Activated B cell treated with CpG ODN at 0.5 μM for 24 hours (primary cell): ENCODE measurements at regions of chr3 and their contacts with region 1.

Region 1: DNA sequence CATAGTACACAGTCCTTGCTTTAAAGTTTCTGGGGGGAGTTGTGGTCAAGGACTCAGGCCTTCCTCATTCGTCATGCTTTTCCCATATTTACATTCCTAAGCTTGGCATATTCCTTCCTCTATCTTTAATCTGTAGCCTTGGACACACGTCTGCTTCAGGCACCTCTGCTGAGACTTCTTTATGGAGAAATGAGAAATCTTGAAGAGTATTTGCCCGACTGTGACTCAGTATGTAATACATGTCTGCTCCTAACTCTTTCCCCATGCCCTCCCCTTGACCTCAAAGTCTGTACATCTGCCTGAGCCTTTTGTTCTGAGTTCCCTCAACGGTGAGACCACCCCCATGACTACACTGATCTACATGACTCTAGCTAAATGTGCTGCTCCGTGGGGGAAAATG is 246.1 kb downstream of the SI start:
- DNase-seq: no peak
- ATAC-seq: no peak
- H3K4me3 Mint-ChIP-seq: no peak overlapping the region
- H3K27ac Mint-ChIP-seq: no peak overlapping the region
- H3K4me1 Mint-ChIP-seq: no peaks in the 10 kb centered on the region
- H3K27me3 Mint-ChIP-seq: no peaks in the 10 kb centered on the region
- CTCF ChIP-seq: no peak

Region 2: DNA sequence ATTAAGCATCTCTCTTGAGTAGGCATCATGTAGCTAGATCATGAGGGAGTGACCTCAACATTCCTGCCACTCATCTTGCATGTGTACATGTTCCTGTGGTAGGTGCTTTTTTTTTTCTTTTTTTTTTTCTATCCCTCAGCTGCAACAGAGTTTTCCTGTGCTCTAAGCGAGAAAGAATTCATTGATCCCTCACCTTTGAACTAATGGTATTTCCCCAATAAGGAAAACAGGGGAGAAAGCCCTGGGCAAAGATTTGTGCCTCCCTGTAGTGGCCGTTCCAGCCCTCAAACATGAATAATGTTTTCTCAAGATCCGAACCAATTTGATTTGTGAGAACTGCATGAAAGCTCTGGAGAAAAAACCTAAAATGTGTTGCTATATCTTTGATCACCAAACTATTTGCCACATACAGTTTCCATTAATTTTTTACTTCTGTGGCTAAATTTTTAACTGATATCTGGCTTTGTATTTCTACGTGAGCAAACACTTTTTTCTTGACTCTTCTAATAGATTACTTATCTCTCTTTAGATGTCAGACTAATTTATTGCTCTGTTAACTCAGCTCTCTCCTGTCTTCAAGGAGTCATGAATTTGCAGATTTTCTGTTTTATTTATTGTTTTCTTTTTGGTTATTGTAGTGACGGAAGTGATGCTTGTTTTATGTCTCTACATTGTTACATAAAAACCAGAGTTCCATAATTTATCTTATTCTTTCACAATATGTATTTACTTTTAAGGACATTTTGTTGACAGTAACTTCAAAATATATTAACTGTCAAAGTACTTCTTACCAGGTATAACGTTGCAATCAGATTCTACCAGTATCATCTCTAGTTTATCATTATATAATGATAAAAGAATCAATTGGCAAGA is 1939.1 kb before region 1 on chr3:
- CTCF ChIA-PET with region 1: no interaction called
- POLR2A ChIA-PET with region 1: no interaction called
- intact Hi-C with region 1: no loop called
- DNase-seq: no peak
- ATAC-seq: no peak
- H3K4me3 Mint-ChIP-seq: no peak overlapping the region
- H3K27ac Mint-ChIP-seq: no peak overlapping the region
- H3K4me1 Mint-ChIP-seq: no peaks in the 10 kb centered on the region
- H3K27me3 Mint-ChIP-seq: no peaks in the 10 kb centered on the region
- CTCF ChIP-seq: no peak

Region 3: DNA sequence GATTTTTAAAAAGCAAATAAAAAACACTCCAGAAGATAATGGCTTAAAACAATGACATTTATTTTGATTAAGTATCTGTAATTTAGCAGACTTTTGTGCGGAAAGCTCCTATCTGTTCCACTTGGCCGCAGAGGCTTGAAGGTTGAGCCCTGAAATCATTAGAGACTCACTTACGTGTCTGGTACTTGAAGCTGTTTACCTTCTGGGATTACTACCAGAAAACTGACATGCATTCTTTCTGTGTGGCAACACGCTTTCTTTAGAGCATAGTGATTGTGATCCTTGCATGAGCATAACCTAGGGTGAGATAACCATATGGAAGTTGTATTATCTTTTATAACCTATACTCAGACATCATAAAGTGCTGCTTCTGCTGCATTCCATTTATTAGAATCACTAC is 52.4 kb before region 1 on chr3:
- CTCF ChIA-PET with region 1: no interaction called
- POLR2A ChIA-PET with region 1: no interaction called
- intact Hi-C with region 1: loop called (anchors 10 kb)
- DNase-seq: no peak
- ATAC-seq: no peak
- H3K4me3 Mint-ChIP-seq: no peak overlapping the region
- H3K27ac Mint-ChIP-seq: no peak overlapping the region
- H3K4me1 Mint-ChIP-seq: no peaks in the 10 kb centered on the region
- H3K27me3 Mint-ChIP-seq: no peaks in the 10 kb centered on the region
- CTCF ChIP-seq: no peak